CD4-positive, alpha-beta T cell (primary cell): ENCODE measurements at regions of chr4 and their contacts with region 1.

Region 1: DNA sequence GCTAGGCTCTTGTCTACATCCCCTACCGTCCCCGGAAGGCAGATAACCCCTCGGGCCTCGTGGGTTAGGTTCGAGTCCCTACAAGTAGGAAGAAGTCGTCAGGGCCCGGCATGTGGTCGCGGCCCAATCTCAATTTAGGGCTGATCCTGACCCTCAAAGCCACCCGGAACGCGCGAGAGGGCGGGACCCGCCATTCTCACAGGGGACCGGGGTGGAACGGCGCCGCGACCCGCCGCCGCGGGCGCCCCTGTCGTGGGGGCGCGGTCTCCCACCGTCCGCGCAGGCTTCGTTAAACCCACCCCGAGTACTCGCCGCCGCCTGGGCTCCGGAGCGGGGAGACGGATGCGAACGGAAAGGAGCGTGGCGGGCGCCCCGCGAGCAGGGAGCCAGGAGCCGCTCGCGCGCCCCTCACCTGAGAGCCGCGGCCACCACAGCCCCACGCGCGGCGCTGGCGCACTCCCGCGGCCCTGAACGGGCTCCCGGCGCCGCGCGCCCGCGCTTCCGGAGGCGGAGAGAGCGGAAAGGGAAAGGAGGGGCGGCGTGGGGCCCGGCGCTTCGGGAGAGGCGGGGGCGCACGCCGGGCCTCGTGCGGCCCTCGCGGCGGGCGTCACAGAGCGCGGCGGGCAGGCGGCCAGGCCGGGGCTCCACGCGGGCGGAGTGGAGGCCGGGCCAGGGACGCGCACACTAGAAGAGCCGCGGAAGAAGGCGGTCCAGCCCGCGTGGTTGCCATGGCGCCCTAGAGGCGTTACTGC is at the start of gene CFAP97:
- DNase-seq: peak; percentile 59 to 96 (median 76)
- ATAC-seq: peak; percentile 79
- H3K4me3 ChIP-seq: peak within 1 kb of the TSS; percentile 76
- H3K4me3 Mint-ChIP-seq: peak within 1 kb of the TSS; percentile 98
- H3K27ac ChIP-seq: peak within 1 kb of the TSS; percentile 89 to 90
- H3K27ac Mint-ChIP-seq: peak within 1 kb of the TSS; percentile 89
- H3K4me1 ChIP-seq: peaks cover 42% of the 10 kb centered on the region
- H3K4me1 Mint-ChIP-seq: peaks cover 60% of the 10 kb centered on the region
- H3K27me3 ChIP-seq: no peaks in the 10 kb centered on the region
- H3K27me3 Mint-ChIP-seq: no peaks in the 10 kb centered on the region
- CTCF ChIP-seq: no peak
- total RNA-seq, gene CFAP97: 24.5 to 26.6 TPM

Region 2: GRCh38 chr4:183504064-183504929 is 1699.4 kb before region 1 on chr4:
- CTCF ChIA-PET with region 1: no interaction called
- POLR2A ChIA-PET with region 1: no interaction called
- intact Hi-C with region 1: loop called in 1 of 2 experiments (anchors 5 kb)
- DNase-seq: peak; percentile 98 to 100 (median 99)
- ATAC-seq: peak; percentile 77
- H3K4me3 ChIP-seq: peak overlapping the region; percentile 90
- H3K4me3 Mint-ChIP-seq: peak overlapping the region; percentile 100
- H3K27ac ChIP-seq: peak overlapping the region; percentile 87 to 94
- H3K27ac Mint-ChIP-seq: peak overlapping the region; percentile 97
- H3K4me1 ChIP-seq: peaks cover 14% of the 10 kb centered on the region
- H3K4me1 Mint-ChIP-seq: peaks cover 46% of the 10 kb centered on the region
- H3K27me3 ChIP-seq: no peaks in the 10 kb centered on the region
- H3K27me3 Mint-ChIP-seq: no peaks in the 10 kb centered on the region
- CTCF ChIP-seq: peak; percentile 8

Region 3: DNA sequence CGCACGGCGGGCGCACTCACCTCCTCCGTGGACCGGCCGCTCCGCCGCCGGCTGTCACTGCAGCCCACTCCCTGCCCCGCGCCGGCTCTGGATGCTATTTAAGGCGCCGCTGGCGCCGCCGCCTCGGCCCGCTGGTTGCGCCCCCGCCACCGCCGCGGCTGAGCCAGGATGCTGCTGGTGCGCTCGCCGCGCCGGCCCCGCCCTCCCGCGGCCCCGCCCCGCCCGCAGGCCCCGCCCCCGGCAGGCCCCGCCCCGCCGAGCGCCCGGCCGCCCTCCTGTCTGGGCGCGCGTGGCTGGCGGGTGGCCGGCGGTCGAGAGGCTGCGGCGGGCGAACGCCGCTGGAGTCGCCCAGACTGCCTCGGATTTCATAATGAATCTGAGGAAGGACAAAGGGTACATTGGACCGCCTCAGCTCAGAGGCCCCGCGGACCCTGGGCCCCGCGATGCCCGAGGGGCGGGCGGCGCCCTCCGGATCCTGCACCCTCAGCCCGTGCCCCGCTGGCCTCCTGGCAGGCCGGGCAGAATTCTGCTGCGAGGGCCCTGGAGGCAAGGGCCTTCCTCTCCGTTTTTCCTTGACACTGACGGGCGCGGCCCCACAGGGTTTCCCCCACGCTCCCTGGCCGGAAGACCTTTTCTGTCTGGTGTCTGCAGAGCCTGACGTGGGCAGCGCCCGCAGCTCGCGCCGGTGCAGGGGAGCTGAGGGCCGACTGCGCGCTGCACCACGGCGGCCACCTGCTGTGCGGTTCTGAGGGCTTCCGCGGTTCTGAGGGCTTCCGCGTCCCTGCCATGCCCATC is 377.6 kb before region 1 on chr4 and contains the start of gene ACSL1:
- CTCF ChIA-PET with region 1: no interaction called
- POLR2A ChIA-PET with region 1: no interaction called
- intact Hi-C with region 1: loop called in 1 of 2 experiments (anchors 10 kb)
- DNase-seq: peak; percentile 58 to 90 (median 72)
- ATAC-seq: peak; percentile 85
- H3K4me3 ChIP-seq: peak within 1 kb of the TSS; percentile 59
- H3K4me3 Mint-ChIP-seq: peak within 1 kb of the TSS; percentile 97
- H3K27ac ChIP-seq: peak within 1 kb of the TSS in 1 of 2 donors; percentile 31
- H3K27ac Mint-ChIP-seq: peak within 1 kb of the TSS; percentile 92
- H3K4me1 ChIP-seq: peaks cover 23% of the 10 kb centered on the region
- H3K4me1 Mint-ChIP-seq: peaks cover 40% of the 10 kb centered on the region
- H3K27me3 ChIP-seq: no peaks in the 10 kb centered on the region
- H3K27me3 Mint-ChIP-seq: no peaks in the 10 kb centered on the region
- CTCF ChIP-seq: no peak
- total RNA-seq, gene ACSL1: 12.4 to 12.5 TPM

Region 4: GRCh38 chr4:185096032-185096653 is 107.5 kb before region 1 on chr4:
- CTCF ChIA-PET with region 1: no interaction called
- POLR2A ChIA-PET with region 1: no interaction called
- intact Hi-C with region 1: no loop called
- DNase-seq: peak in 5 of 14 experiments; percentile 4 to 49 (median 36)
- ATAC-seq: no peak
- H3K4me3 ChIP-seq: no peak overlapping the region
- H3K4me3 Mint-ChIP-seq: no peak overlapping the region
- H3K27ac ChIP-seq: no peak overlapping the region
- H3K27ac Mint-ChIP-seq: no peak overlapping the region
- H3K4me1 ChIP-seq: no peaks in the 10 kb centered on the region
- H3K4me1 Mint-ChIP-seq: no peaks in the 10 kb centered on the region
- H3K27me3 ChIP-seq: peaks cover 11 to 15% of the 10 kb centered on the region in 2 experiments
- H3K27me3 Mint-ChIP-seq: peaks cover 47% of the 10 kb centered on the region
- CTCF ChIP-seq: peak; percentile 57

Region 5: DNA sequence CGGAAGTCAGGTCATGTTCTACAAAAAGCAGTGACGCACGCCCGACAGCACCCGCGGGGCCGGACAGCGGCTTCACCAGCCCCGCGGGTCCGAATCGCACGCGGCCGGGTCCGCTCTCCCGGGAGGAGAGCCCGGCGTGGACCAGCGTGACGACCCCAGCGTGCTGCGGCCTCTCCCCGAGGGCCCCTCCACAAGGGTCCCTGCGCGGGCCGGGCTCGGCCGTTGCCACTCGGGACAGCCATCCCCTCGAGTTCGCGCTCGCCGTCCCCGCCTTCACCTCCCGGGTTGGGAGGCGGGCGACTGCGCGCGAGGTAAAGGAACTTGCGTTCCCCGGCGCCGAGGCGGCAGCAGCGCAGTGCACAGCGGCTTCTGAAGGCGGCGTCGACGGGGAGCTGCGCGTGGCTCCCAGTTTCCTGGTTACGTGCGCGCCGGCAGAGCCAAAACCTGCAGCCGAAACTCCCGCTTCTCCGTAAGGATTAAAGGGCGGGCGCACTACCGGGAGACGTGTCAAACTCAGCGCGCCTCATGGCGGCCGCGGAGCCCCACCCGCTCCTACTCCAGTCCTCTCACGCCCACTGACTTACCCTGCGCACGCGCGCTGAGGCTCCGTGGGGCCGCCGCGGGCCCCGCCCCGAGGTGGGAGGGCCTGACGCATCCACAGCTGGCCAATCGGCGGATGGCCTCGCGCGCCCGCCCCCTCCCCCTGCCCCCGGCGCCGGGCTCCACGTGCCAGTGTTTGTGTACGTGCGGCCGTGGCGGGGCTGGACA is 192.5 kb after region 1 on chr4:
- CTCF ChIA-PET with region 1: no interaction called
- POLR2A ChIA-PET with region 1: interaction called, 22 read pairs
- intact Hi-C with region 1: loop called (anchors 2 to 5 kb)
- DNase-seq: peak; percentile 88 to 98 (median 96)
- ATAC-seq: peak; percentile 91
- H3K4me3 ChIP-seq: peak overlapping the region; percentile 88
- H3K4me3 Mint-ChIP-seq: peak overlapping the region; percentile 92
- H3K27ac ChIP-seq: peak overlapping the region; percentile 93 to 97
- H3K27ac Mint-ChIP-seq: peak overlapping the region; percentile 92
- H3K4me1 ChIP-seq: peaks cover 11% of the 10 kb centered on the region
- H3K4me1 Mint-ChIP-seq: peaks cover 17% of the 10 kb centered on the region
- H3K27me3 ChIP-seq: no peaks in the 10 kb centered on the region
- H3K27me3 Mint-ChIP-seq: no peaks in the 10 kb centered on the region
- CTCF ChIP-seq: no peak

Region 6: GRCh38 chr4:185471235-185472102 is 267.8 kb after region 1 on chr4 and contains the start of gene CCDC110:
- CTCF ChIA-PET with region 1: no interaction called
- POLR2A ChIA-PET with region 1: no interaction called
- intact Hi-C with region 1: loop called in 1 of 2 experiments (anchors 2 kb)
- DNase-seq: peak; percentile 86 to 98 (median 92)
- ATAC-seq: peak; percentile 92
- H3K4me3 ChIP-seq: peak within 1 kb of the TSS; percentile 73
- H3K4me3 Mint-ChIP-seq: peak within 1 kb of the TSS; percentile 93
- H3K27ac ChIP-seq: peak within 1 kb of the TSS in 1 of 2 donors; percentile 31
- H3K27ac Mint-ChIP-seq: peak within 1 kb of the TSS; percentile 63
- H3K4me1 ChIP-seq: peaks cover 20% of the 10 kb centered on the region
- H3K4me1 Mint-ChIP-seq: peaks cover 18% of the 10 kb centered on the region
- H3K27me3 ChIP-seq: peaks cover 0 to 10% of the 10 kb centered on the region in 2 experiments
- H3K27me3 Mint-ChIP-seq: peaks cover 5% of the 10 kb centered on the region
- CTCF ChIP-seq: peak; percentile 48
- total RNA-seq, gene CCDC110: 0.34 to 0.36 TPM